Natural killer cell (primary cell): ENCODE measurements at regions of chr13 and their contacts with region 1.

Region 1: DNA sequence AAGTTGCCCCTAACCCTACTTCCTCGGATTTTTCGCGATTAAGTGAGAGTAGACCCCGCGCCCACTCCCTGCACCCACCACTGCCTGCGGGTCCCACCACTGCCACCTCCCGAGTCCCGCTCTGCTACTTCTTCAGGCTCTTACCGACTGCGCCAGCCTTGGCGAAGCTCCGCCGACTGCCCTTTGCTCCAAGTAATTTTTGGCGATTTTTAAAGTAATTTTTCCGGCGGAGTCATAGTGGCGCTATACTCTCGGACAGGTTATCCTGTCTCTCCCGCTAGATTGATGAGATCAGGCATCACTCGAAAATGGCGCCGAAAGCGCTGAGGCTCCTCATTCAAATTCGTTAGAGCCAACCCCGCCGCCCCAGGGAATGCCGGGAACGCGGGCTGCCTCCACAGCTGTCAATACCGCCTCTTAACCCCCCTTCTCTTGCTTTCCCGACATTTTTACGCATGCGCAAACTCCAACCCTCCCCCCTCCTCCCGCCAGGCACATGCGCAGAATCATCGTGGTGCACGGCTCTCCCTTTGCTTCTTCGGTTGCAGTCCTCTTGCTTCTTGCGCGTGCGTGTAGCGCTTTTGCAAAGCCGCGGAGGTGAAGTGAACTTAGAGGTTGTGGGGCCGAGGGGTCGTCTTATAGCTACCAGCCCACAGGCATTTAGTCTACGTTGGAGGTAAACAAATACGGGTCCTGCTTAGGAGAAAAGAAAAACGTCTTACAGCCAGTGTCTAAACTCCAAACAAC is 66.6 kb downstream of the KCNRG start:
- DNase-seq: peak; percentile 97 to 100
- ATAC-seq: peak; percentile 71 to 90 (median 79)
- H3K4me3 ChIP-seq: peak overlapping the region; percentile 79
- H3K4me3 Mint-ChIP-seq: peak overlapping the region; percentile 99
- H3K27ac ChIP-seq: peak overlapping the region; percentile 93
- H3K27ac Mint-ChIP-seq: peak overlapping the region; percentile 96 to 97
- H3K4me1 ChIP-seq: peaks cover 12% of the 10 kb centered on the region
- H3K4me1 Mint-ChIP-seq: peaks cover 44 to 56% of the 10 kb centered on the region in 2 donors
- H3K27me3 ChIP-seq: peaks cover 2% of the 10 kb centered on the region
- H3K27me3 Mint-ChIP-seq: peaks cover 0 to 3% of the 10 kb centered on the region in 2 donors
- CTCF ChIP-seq: no peak

Region 2: GRCh38 chr13:49936085-49936940 is 145.5 kb before region 1 on chr13 and contains the start of gene SPRYD7:
- intact Hi-C with region 1: loop called (anchors 1 kb)
- DNase-seq: peak; percentile 96 to 97
- ATAC-seq: peak; percentile 95 to 99 (median 97)
- H3K4me3 ChIP-seq: peak within 1 kb of the TSS; percentile 64
- H3K4me3 Mint-ChIP-seq: peak within 1 kb of the TSS; percentile 93
- H3K27ac ChIP-seq: peak within 1 kb of the TSS; percentile 46
- H3K27ac Mint-ChIP-seq: peak within 1 kb of the TSS; percentile 79 to 91
- H3K4me1 ChIP-seq: peaks cover 14% of the 10 kb centered on the region
- H3K4me1 Mint-ChIP-seq: peaks cover 17 to 20% of the 10 kb centered on the region in 2 donors
- H3K27me3 ChIP-seq: no peaks in the 10 kb centered on the region
- H3K27me3 Mint-ChIP-seq: no peaks in the 10 kb centered on the region
- CTCF ChIP-seq: peak; percentile 78
- total RNA-seq, gene SPRYD7: 3.0 to 6.2 (median 4.4) TPM

Region 3: GRCh38 chr13:50006426-50007135 is 75.3 kb before region 1 on chr13:
- intact Hi-C with region 1: no loop called
- DNase-seq: no peak
- ATAC-seq: no peak
- H3K4me3 ChIP-seq: no peak overlapping the region
- H3K4me3 Mint-ChIP-seq: no peak overlapping the region
- H3K27ac ChIP-seq: no peak overlapping the region
- H3K27ac Mint-ChIP-seq: peak overlapping the region; percentile 52
- H3K4me1 ChIP-seq: no peaks in the 10 kb centered on the region
- H3K4me1 Mint-ChIP-seq: peaks cover 24 to 27% of the 10 kb centered on the region in 2 donors
- H3K27me3 ChIP-seq: no peaks in the 10 kb centered on the region
- H3K27me3 Mint-ChIP-seq: no peaks in the 10 kb centered on the region
- CTCF ChIP-seq: no peak

Region 4: GRCh38 chr13:50123862-50124536 is 42.1 kb after region 1 on chr13:
- intact Hi-C with region 1: loop called (anchors 1 kb)
- DNase-seq: peak; percentile 82 to 89
- ATAC-seq: peak; percentile 65 to 88 (median 77)
- H3K4me3 ChIP-seq: peak overlapping the region; percentile 60
- H3K4me3 Mint-ChIP-seq: peak overlapping the region; percentile 91
- H3K27ac ChIP-seq: peak overlapping the region; percentile 95
- H3K27ac Mint-ChIP-seq: peak overlapping the region; percentile 93 to 98
- H3K4me1 ChIP-seq: peaks cover 32% of the 10 kb centered on the region
- H3K4me1 Mint-ChIP-seq: peaks cover 39 to 42% of the 10 kb centered on the region in 2 donors
- H3K27me3 ChIP-seq: peaks cover 1% of the 10 kb centered on the region
- H3K27me3 Mint-ChIP-seq: peaks cover 4 to 8% of the 10 kb centered on the region in 2 donors
- CTCF ChIP-seq: no peak

Region 5: GRCh38 chr13:50208826-50209335 is 127.0 kb after region 1 on chr13:
- intact Hi-C with region 1: no loop called
- DNase-seq: no peak
- ATAC-seq: peak in 1 of 3 donors; percentile 72
- H3K4me3 ChIP-seq: no peak overlapping the region
- H3K4me3 Mint-ChIP-seq: no peak overlapping the region
- H3K27ac ChIP-seq: no peak overlapping the region
- H3K27ac Mint-ChIP-seq: peak overlapping the region in 1 of 2 donors; percentile 23
- H3K4me1 ChIP-seq: no peaks in the 10 kb centered on the region
- H3K4me1 Mint-ChIP-seq: peaks cover 5 to 8% of the 10 kb centered on the region in 2 donors
- H3K27me3 ChIP-seq: no peaks in the 10 kb centered on the region
- H3K27me3 Mint-ChIP-seq: peaks cover 0 to 5% of the 10 kb centered on the region in 2 donors
- CTCF ChIP-seq: no peak

Region 6: GRCh38 chr13:50531917-50532899 is 450.4 kb after region 1 on chr13:
- intact Hi-C with region 1: loop called (anchors 5 kb)
- DNase-seq: peak in 1 of 2 donors; percentile 44
- ATAC-seq: no peak
- H3K4me3 ChIP-seq: no peak overlapping the region
- H3K4me3 Mint-ChIP-seq: no peak overlapping the region
- H3K27ac ChIP-seq: no peak overlapping the region
- H3K27ac Mint-ChIP-seq: no peak overlapping the region
- H3K4me1 ChIP-seq: peaks cover 6% of the 10 kb centered on the region
- H3K4me1 Mint-ChIP-seq: no peaks in the 10 kb centered on the region
- H3K27me3 ChIP-seq: no peaks in the 10 kb centered on the region
- H3K27me3 Mint-ChIP-seq: peaks cover 0 to 14% of the 10 kb centered on the region in 2 donors
- CTCF ChIP-seq: peak; percentile 67